Activated CD4-positive, alpha-beta T cell treated with anti-CD3 and anti-CD28 coated beads, Interleukin-2, amount 10 ng/mL, durations not matched to agents 24 days and 14 days (primary cell): ENCODE measurements at regions of chr6 and their contacts with region 1.

Region 1: GRCh38 chr6:26196846-26197648 is 109.8 kb downstream of the HFE start:
- DNase-seq: peak; percentile 96
- H3K4me3 Mint-ChIP-seq: peak overlapping the region; percentile 87
- H3K27ac Mint-ChIP-seq: peak overlapping the region; percentile 93
- H3K4me1 Mint-ChIP-seq: peaks cover 57% of the 10 kb centered on the region
- H3K27me3 Mint-ChIP-seq: no peaks in the 10 kb centered on the region

Region 2: DNA sequence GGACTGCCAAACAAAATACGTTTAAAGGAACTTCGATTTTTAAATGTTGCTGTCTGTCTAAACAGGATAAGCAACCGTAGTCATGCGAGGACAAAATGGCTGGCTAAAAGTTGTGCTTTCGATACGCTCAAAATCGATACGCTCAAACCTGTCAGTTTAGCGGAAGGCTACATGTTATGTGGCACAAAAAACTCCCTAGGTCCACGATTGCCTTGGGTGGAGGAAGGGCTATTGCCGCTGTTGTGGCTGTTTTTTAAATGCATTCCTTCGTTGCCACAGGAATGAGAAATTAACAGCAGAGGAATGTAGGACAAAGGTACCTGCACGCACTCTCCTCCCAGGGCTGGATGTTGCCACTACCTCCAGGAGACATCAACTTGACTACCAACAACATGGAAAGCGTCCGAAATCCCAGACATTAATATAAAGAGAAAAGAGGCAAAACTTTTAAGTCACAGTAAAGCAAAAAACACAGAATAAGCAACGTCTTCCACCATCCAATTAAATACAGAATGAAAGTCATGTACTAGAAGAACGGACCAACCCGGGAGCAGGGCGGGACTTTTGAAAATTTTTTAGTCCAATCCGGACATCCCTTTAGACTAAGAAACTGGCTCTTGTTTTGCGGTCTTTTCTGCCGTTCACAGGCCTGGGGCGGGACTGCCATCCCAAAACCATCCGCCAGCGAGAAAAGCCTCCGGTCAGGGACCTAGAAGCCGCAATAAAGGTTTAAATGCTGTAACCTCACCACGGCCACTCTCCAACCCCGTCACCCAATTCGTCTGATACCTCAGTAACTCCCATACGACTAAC is 142.0 kb before region 1 on chr6:
- intact Hi-C with region 1: loop called (anchors 1 kb)
- DNase-seq: peak; percentile 96
- H3K4me3 Mint-ChIP-seq: peak overlapping the region; percentile 94
- H3K27ac Mint-ChIP-seq: peak overlapping the region; percentile 99
- H3K4me1 Mint-ChIP-seq: peaks cover 30% of the 10 kb centered on the region
- H3K27me3 Mint-ChIP-seq: peaks cover 2% of the 10 kb centered on the region

Region 3: GRCh38 chr6:26131618-26132017 is 65.4 kb before region 1 on chr6:
- intact Hi-C with region 1: no loop called
- DNase-seq: no peak
- H3K4me3 Mint-ChIP-seq: no peak overlapping the region
- H3K27ac Mint-ChIP-seq: no peak overlapping the region
- H3K4me1 Mint-ChIP-seq: peaks cover 34% of the 10 kb centered on the region
- H3K27me3 Mint-ChIP-seq: no peaks in the 10 kb centered on the region

Region 4: DNA sequence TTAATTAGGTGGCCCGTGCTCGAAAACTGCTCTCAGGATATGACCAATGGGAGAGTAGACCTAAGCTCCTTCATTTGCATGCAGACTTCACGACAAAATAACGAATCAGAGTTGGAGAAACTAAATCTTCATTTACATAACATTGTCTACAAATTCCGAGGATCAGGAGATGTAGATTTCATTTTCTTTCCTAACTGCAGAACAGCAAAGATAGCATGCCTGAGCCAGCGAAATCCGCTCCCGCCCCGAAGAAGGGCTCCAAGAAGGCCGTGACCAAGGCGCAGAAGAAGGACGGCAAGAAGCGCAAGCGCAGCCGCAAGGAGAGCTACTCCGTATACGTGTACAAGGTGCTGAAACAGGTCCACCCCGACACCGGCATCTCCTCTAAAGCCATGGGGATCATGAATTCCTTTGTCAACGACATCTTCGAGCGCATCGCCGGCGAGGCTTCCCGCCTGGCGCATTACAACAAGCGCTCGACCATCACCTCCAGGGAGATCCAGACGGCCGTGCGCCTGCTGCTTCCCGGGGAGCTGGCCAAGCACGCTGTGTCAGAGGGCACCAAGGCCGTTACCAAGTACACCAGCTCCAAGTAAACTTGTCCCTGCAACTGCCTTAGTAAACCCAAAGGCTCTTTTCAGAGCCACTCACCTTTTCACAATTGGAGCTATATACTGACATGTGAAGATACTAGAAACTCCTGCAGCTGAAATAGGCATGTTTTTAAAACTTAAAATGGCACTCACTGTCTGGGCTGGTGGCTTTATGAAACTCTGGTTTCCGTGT is 13.3 kb before region 1 on chr6:
- intact Hi-C with region 1: loop called (anchors 1 kb)
- DNase-seq: peak; percentile 92
- H3K4me3 Mint-ChIP-seq: peak overlapping the region; percentile 93
- H3K27ac Mint-ChIP-seq: peak overlapping the region; percentile 98
- H3K4me1 Mint-ChIP-seq: peaks cover 55% of the 10 kb centered on the region
- H3K27me3 Mint-ChIP-seq: no peaks in the 10 kb centered on the region

Region 5: GRCh38 chr6:26223650-26224546 is 26.9 kb after region 1 on chr6:
- intact Hi-C with region 1: no loop called
- DNase-seq: peak; percentile 90
- H3K4me3 Mint-ChIP-seq: no peak overlapping the region
- H3K27ac Mint-ChIP-seq: no peak overlapping the region
- H3K4me1 Mint-ChIP-seq: peaks cover 30% of the 10 kb centered on the region
- H3K27me3 Mint-ChIP-seq: no peaks in the 10 kb centered on the region

Region 6: DNA sequence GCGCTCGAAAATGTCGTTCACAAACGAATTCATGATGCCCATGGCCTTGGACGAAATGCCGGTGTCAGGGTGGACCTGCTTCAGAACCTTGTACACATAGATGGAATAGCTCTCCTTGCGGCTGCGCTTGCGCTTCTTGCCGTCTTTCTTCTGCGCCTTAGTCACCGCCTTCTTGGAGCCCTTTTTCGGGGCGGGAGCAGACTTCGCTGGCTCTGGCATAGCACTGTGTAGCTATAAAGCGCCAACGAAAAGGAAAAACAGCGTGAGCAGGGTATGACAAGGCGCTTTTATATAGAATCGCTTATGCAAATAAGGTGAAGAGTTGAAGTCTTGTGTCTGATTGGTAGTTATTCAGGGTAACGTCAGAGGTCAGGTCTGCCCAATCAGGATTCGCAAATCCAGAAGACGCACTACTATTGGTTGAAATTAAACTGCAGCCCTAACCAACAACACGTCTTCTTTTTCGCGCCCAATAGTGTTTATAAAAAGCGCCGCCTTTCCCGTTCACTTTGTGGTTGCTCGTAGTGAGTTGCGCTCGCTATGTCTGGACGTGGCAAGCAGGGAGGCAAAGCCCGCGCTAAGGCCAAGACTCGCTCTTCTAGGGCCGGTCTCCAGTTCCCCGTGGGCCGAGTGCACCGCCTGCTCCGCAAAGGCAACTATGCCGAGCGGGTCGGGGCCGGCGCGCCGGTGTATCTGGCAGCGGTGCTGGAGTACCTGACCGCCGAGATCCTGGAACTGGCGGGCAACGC is 935.7 kb after region 1 on chr6:
- intact Hi-C with region 1: loop called (anchors 5 kb)
- DNase-seq: peak; percentile 98
- H3K4me3 Mint-ChIP-seq: no peak overlapping the region
- H3K27ac Mint-ChIP-seq: no peak overlapping the region
- H3K4me1 Mint-ChIP-seq: peaks cover 37% of the 10 kb centered on the region
- H3K27me3 Mint-ChIP-seq: no peaks in the 10 kb centered on the region